ENCODE measurements at regions of chr9 and their contacts with region 1.

Region 1: DNA sequence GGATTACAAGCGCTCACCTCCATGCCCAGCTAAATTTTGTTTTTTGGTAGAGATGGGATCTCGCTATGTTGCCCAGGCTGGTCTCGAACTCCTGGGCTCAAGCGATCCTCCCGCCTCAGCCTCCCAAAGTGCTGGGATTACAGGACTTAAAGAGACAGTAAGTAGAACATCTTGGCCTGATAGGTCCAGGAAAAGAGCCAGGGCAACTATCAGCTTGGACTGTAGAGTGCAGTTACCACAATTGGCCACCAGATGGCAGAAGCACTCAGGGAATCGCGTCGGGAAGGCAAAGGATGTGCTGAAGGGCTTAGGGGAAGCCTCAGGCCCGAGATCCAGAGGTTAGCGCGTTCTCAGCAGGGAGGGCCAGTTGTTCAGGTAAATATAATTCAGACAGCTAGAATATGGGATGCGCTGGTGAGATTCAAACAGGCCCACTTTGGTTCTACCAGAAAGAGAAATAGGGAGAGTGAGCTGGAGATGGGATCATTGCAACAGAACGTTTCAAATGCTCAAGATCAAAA is 21.5 kb downstream of the C9orf57 start:
- DNase-seq: peak; percentile 83

Region 2: DNA sequence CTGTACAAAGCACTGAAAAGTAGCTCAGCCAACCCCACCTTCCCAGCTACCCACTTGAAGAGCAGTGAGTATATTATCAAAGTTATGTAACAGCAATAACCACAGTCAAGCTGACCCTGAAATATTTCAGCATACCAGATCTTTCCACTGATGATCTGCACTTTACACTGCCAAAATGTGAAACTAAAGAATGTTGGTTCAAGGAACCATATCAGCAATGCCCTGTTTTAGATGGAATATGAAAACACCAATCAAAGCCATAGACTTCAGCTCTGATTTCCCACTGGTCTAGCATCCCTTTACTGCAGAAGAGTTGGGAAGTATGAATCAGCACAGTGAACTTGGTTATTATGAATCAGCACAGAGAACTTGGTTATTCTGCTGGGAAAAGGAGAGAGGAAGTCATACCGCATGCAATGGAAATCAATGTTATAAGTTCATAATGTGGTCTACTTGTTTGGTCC is 290.6 kb before region 1 on chr9:
- intact Hi-C with region 1: no loop called
- DNase-seq: no peak

Region 3: DNA sequence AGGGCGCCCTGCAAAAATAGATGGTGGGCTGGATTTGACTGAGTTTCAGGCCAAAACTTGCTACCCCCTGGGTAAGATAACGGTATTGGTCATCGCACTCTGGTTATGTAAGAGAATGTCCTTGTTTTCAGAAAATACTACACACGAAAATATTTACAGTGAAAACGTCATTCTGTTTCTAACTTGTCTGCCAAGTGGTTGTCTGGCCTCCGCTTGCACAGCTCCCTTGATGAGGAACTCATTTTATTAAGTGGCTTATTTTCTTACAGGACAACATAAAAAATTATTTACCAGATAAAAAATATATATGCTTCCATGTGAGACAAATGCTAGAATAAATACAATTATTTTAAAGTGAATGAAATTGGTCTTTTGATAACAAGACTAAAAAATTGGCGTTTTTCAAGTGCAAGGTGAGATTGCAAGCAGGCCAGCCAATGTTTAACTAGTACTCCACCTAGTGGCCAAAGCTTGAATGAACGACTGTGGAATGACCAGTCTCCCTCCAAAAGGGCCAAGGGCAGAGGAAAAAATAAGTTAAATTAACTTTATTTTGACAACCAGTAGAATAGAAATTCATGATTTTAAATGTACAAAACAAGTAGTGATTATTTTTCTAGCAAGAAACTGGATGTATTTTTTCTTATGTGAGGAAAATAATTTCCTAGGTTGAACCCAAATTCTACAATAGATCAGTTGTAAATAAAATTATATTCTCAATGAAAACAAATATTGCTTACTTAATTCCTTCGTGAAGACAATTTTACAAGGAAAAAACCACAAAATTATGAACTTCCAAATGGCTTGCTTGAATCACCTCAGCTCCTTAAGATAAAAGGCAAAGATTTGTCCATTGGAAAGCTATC is 232.9 kb after region 1 on chr9:
- intact Hi-C with region 1: loop called (anchors 1 kb)
- DNase-seq: no peak

Region 4: GRCh38 chr9:72827950-72828731 is 789.2 kb after region 1 on chr9:
- intact Hi-C with region 1: loop called (anchors 10 kb)
- DNase-seq: no peak